ENCODE measurements at regions of chr12 and their contacts with region 1.

Region 1: GRCh38 chr12:119115296-119115905 is 63.3 kb upstream of the HSPB8 start:
- DNase-seq: peak; percentile 74
- ATAC-seq: no peak
- H3K4me3 ChIP-seq: no peak overlapping the region
- H3K27ac ChIP-seq: no peak overlapping the region
- H3K4me1 ChIP-seq: no peaks in the 10 kb centered on the region
- H3K27me3 ChIP-seq: peaks cover 27% of the 10 kb centered on the region
- CTCF ChIP-seq: peak; percentile 90

Region 2: DNA sequence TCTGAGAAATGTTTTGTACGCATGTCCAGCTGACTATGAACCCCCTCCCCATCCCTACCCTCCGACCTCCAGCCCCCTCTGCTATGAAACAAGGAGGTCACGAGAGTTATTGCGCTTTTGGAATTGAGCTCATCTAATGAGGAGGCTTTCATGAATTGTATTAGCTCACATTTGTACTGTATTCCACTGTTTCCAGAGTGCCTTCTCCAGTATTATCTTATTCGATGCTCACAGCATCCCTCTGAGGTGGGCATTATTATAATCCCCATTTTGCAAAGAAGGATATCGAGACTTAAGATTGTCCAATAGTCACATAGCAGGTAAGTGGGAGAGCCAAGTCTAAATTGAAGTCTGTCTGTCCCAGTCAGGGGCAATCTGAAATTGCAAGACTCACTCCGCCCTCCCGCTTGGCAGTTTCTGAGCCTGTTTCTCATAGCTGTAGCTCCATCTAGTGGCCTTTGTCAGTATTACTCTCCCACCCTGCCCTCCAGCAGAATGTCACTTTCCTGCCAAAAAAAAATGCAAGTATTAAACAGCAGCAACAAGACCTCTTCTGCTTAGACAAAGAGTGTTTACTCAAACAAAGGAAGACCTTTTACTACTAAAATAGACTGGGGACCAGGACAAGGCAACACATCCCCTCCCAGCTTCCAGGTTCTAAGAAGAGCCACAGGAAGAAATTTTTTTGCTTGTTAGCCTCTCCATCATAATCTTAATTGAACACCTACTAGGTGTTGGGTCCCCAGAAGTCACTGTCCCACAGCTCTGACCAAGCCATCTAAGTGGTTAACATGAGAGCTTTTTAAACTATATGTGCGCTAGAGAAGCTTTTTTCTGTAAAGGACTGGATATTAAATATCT is 429.6 kb after region 1 on chr12:
- CTCF ChIA-PET with region 1: no interaction called
- POLR2A ChIA-PET with region 1: no interaction called
- intact Hi-C with region 1: loop called (anchors 2 kb)
- DNase-seq: peak; percentile 85
- ATAC-seq: peak; percentile 94
- H3K4me3 ChIP-seq: no peak overlapping the region
- H3K27ac ChIP-seq: no peak overlapping the region
- H3K4me1 ChIP-seq: no peaks in the 10 kb centered on the region
- H3K27me3 ChIP-seq: peaks cover 26% of the 10 kb centered on the region
- CTCF ChIP-seq: peak; percentile 93

Region 3: GRCh38 chr12:120820885-120821510 is 1705.6 kb after region 1 on chr12:
- CTCF ChIA-PET with region 1: no interaction called
- POLR2A ChIA-PET with region 1: no interaction called
- intact Hi-C with region 1: no loop called
- DNase-seq: no peak
- ATAC-seq: no peak
- H3K4me3 ChIP-seq: no peak overlapping the region
- H3K27ac ChIP-seq: no peak overlapping the region
- H3K4me1 ChIP-seq: no peaks in the 10 kb centered on the region
- H3K27me3 ChIP-seq: no peaks in the 10 kb centered on the region
- CTCF ChIP-seq: no peak

Measured in PC-3 (cell line).